ENCODE measurements at regions of chr7 and their contacts with region 1.

Region 1: GRCh38 chr7:113787106-113787505 is 131.7 kb downstream of the PPP1R3A start:
- DNase-seq: no peak
- ATAC-seq: no peak
- H3K4me3 ChIP-seq: no peak overlapping the region
- H3K4me3 Mint-ChIP-seq: no peak overlapping the region
- H3K27ac ChIP-seq: no peak overlapping the region
- H3K27ac Mint-ChIP-seq: no peak overlapping the region
- H3K4me1 ChIP-seq: no peaks in the 10 kb centered on the region
- H3K4me1 Mint-ChIP-seq: no peaks in the 10 kb centered on the region
- H3K27me3 ChIP-seq: no peaks in the 10 kb centered on the region
- H3K27me3 Mint-ChIP-seq: no peaks in the 10 kb centered on the region
- CTCF ChIP-seq: no peak

Region 2: GRCh38 chr7:113770146-113770738 is 16.9 kb before region 1 on chr7:
- CTCF ChIA-PET with region 1: no interaction called
- POLR2A ChIA-PET with region 1: no interaction called
- intact Hi-C with region 1: loop called in 1 of 2 experiments (anchors 1 kb)
- DNase-seq: peak in 1 of 9 experiments; percentile 0
- ATAC-seq: no peak
- H3K4me3 ChIP-seq: no peak overlapping the region
- H3K4me3 Mint-ChIP-seq: no peak overlapping the region
- H3K27ac ChIP-seq: no peak overlapping the region
- H3K27ac Mint-ChIP-seq: no peak overlapping the region
- H3K4me1 ChIP-seq: no peaks in the 10 kb centered on the region
- H3K4me1 Mint-ChIP-seq: no peaks in the 10 kb centered on the region
- H3K27me3 ChIP-seq: no peaks in the 10 kb centered on the region
- H3K27me3 Mint-ChIP-seq: no peaks in the 10 kb centered on the region
- CTCF ChIP-seq: no peak

Region 3: DNA sequence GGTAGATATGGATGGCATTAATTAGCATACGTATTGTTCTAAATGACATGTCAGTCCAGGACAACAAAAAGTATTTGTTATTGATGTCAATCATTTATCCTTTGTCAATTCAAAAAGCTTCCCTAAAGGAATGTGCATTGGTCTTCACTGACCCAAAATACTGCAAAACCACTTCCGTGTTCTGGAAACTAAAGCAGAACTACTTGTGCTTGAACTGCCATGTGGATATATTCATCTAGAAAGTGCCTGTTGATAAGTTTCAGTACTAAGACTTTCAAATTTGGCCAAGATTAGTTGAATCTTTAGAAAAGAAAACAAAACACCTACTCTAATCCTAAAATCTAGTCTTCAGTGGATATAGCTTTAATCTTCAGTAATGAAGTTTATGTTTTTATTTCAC is 373.8 kb after region 1 on chr7:
- CTCF ChIA-PET with region 1: no interaction called
- POLR2A ChIA-PET with region 1: no interaction called
- intact Hi-C with region 1: no loop called
- DNase-seq: no peak
- ATAC-seq: no peak
- H3K4me3 ChIP-seq: no peak overlapping the region
- H3K4me3 Mint-ChIP-seq: no peak overlapping the region
- H3K27ac ChIP-seq: no peak overlapping the region
- H3K27ac Mint-ChIP-seq: no peak overlapping the region
- H3K4me1 ChIP-seq: no peaks in the 10 kb centered on the region
- H3K4me1 Mint-ChIP-seq: no peaks in the 10 kb centered on the region
- H3K27me3 ChIP-seq: no peaks in the 10 kb centered on the region
- H3K27me3 Mint-ChIP-seq: no peaks in the 10 kb centered on the region
- CTCF ChIP-seq: no peak

Region 4: GRCh38 chr7:114334989-114335388 is 547.9 kb after region 1 on chr7:
- CTCF ChIA-PET with region 1: no interaction called
- POLR2A ChIA-PET with region 1: no interaction called
- intact Hi-C with region 1: no loop called
- DNase-seq: no peak
- ATAC-seq: no peak
- H3K4me3 ChIP-seq: no peak overlapping the region
- H3K4me3 Mint-ChIP-seq: no peak overlapping the region
- H3K27ac ChIP-seq: no peak overlapping the region
- H3K27ac Mint-ChIP-seq: no peak overlapping the region
- H3K4me1 ChIP-seq: no peaks in the 10 kb centered on the region
- H3K4me1 Mint-ChIP-seq: no peaks in the 10 kb centered on the region
- H3K27me3 ChIP-seq: no peaks in the 10 kb centered on the region
- H3K27me3 Mint-ChIP-seq: no peaks in the 10 kb centered on the region
- CTCF ChIP-seq: no peak

Measured in CD8-positive, alpha-beta T cell (primary cell).